Calu3 (cell line): ENCODE measurements at regions of chr6 and their contacts with region 1.

Region 1: GRCh38 chr6:39037707-39038106 is 10.9 kb upstream of the GLP1R start:
- DNase-seq: no peak
- H3K4me3 Mint-ChIP-seq: no peak overlapping the region
- H3K27ac Mint-ChIP-seq: no peak overlapping the region
- H3K4me1 Mint-ChIP-seq: peaks cover 7% of the 10 kb centered on the region
- H3K27me3 Mint-ChIP-seq: peaks cover 100% of the 10 kb centered on the region
- CTCF ChIP-seq: no peak

Region 2: GRCh38 chr6:39095464-39095977 is 57.8 kb after region 1 on chr6:
- CTCF ChIA-PET with region 1: no interaction called
- intact Hi-C with region 1: loop called (anchors 5 kb)
- DNase-seq: no peak
- H3K4me3 Mint-ChIP-seq: no peak overlapping the region
- H3K27ac Mint-ChIP-seq: no peak overlapping the region
- H3K4me1 Mint-ChIP-seq: no peaks in the 10 kb centered on the region
- H3K27me3 Mint-ChIP-seq: peaks cover 28% of the 10 kb centered on the region
- CTCF ChIP-seq: no peak

Region 3: DNA sequence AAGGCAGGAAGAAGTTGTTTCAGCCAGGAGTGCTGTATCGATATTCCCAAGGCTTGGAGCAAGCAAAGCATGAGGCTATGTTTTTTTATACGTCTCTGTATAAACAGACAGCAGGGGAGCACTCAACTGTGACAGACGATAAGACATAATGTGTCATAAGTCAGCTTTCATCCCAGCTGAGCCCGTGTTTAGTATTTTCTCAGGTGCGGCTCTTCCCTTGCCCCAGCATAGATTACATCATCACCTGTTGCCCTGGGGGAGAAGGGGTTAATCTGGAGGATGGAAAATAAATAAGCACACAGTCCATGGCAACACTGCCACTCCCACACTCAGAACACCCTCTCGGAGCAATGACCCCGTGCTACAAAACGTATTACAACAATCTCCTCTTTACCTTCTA is 213.7 kb after region 1 on chr6:
- CTCF ChIA-PET with region 1: no interaction called
- intact Hi-C with region 1: no loop called
- DNase-seq: no peak
- H3K4me3 Mint-ChIP-seq: no peak overlapping the region
- H3K27ac Mint-ChIP-seq: no peak overlapping the region
- H3K4me1 Mint-ChIP-seq: no peaks in the 10 kb centered on the region
- H3K27me3 Mint-ChIP-seq: peaks cover 31% of the 10 kb centered on the region
- CTCF ChIP-seq: no peak